BJ (cell line): ENCODE measurements at regions of chrX and their contacts with region 1.

Region 1: DNA sequence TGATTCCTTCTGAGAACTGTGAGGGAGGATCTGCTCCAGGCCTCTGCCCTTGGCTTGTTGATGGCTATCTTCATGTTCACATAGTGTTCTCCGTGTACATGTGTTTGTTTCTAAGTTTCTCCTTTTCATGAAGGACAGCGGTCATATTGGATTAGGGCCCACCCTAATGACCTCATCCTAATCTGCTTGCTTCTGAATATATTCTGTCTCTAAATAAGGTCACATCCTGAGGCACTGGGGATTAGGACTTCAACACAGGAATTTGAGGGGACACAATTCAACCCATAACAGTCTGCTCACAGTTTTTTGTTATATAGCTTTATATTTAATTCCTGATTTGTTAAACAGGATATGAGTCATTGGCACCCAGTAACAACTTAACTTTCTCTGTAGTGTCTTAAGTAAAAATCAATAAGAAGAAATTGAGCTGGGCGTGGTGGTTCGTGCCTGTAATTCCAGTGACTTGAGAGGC is 154.3 kb upstream of the SMIM10 start:
- DNase-seq: no peak
- H3K4me3 ChIP-seq: no peak overlapping the region
- H3K27me3 ChIP-seq: no peaks in the 10 kb centered on the region
- CTCF ChIP-seq: no peak

Region 2: GRCh38 chrX:134782796-134783195 is 53.7 kb before region 1 on chrX:
- CTCF ChIA-PET with region 1: no interaction called
- POLR2A ChIA-PET with region 1: no interaction called
- DNase-seq: no peak
- H3K4me3 ChIP-seq: no peak overlapping the region
- H3K27me3 ChIP-seq: no peaks in the 10 kb centered on the region
- CTCF ChIP-seq: peak; percentile 48; the same call in 1 of the 2 replicates

Region 3: GRCh38 chrX:134849390-134849789 is 12.9 kb after region 1 on chrX:
- CTCF ChIA-PET with region 1: no interaction called
- POLR2A ChIA-PET with region 1: interaction called, 11 read pairs
- DNase-seq: no peak
- H3K4me3 ChIP-seq: no peak overlapping the region
- H3K27me3 ChIP-seq: no peaks in the 10 kb centered on the region
- CTCF ChIP-seq: no peak

Region 4: GRCh38 chrX:134936542-134936941 is 100.0 kb after region 1 on chrX:
- CTCF ChIA-PET with region 1: no interaction called
- POLR2A ChIA-PET with region 1: no interaction called
- DNase-seq: peak; percentile 46
- H3K4me3 ChIP-seq: no peak overlapping the region
- H3K27me3 ChIP-seq: no peaks in the 10 kb centered on the region
- CTCF ChIP-seq: no peak